ENCODE measurements at regions of chr5 and their contacts with region 1.

Region 1: DNA sequence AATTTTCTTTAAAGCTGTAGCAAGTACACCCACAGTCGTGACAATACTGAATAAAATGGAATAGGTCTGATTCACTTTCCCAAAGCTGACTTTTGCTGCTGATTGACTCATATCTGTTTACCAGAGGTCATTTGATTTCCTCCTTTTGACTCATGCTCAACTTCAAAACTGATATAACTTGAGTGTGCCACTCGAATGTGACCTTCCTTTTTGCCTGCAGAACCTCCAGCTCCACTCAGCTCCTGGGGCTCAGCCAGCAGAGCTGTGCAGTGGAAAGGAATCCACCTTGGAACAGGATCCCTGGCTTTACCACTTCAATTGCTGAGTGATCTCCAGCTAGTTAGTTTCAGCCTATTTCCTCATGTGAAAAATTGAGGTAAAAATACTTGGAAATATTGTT is 84.1 kb downstream of the FEM1C start:
- DNase-seq: no peak

Region 2: GRCh38 chr5:115271295-115272050 is 189.0 kb before region 1 on chr5:
- intact Hi-C with region 1: no loop called
- DNase-seq: no peak

Region 3: GRCh38 chr5:115423541-115423940 is 36.9 kb before region 1 on chr5:
- intact Hi-C with region 1: loop called (anchors 1 kb)
- DNase-seq: peak; percentile 86

Region 4: DNA sequence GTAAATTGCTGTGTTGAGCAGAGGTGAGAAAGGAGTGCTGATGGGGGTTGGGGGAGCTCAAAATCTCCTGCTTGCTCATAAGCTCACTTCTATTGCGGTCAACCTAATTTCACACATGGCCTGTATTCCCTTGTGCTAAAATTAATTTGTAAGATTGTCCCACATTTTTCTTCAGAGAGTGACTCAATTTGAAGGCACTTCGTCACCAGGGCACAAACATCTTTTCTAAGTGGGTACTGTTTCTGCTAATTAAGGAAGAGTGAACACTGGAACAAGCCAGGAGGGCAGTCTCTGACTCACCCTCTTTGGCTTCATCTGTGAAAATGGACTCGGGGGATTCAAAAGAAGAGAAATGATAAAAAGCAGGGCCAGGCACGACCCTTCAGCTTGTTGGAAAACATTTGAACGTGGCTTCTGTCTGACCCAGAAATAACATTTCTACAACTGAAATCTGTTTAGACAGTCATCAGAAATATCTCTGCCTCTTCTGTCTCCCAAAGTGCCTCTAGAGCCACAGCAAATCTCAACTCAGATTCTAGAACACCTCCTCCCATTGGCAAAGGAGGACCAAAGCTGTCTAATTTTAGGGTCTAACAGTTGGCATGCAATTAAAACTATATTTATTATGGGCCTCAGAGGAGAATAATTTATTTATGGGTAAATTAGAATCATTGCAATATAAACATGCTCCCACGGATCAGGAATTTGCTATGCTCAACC is 34.3 kb after region 1 on chr5:
- intact Hi-C with region 1: loop called (anchors 2 kb)
- DNase-seq: no peak

Region 5: DNA sequence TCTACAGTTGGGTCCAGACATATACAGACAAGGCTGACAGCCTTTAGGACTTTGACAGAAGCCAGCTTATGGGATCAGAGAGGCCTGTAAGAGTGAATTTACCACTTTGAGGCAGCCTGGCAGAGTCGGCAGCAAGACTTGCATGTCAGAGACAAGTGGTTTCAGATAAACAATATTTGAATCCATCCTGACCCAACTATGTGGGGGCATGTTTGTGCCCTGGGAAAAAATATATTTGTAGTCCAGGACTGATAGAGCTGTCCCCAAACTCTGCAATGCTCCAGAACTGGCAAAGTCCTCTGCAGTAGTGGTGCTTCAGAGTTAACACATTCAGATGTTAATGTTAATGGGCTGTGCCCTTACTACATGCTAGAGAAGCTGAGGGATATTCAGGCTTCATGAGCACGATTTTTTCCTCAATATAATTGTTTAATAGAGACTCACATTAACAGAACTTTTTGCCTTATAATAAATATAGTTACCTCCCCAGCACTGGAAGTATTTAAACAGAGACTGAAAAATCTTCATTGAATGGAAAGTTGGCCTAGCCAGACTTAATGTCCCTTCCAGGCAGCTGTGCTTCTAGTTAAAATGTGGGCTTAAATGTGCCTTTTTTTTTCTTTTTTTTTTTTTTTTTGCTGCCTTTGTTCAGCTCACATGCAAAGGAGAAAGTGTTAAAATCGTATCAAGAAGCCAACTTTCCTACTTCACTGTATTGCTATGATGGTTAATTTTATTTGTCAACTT is 41.2 kb after region 1 on chr5:
- intact Hi-C with region 1: loop called (anchors 1 kb)
- DNase-seq: no peak

Region 6: DNA sequence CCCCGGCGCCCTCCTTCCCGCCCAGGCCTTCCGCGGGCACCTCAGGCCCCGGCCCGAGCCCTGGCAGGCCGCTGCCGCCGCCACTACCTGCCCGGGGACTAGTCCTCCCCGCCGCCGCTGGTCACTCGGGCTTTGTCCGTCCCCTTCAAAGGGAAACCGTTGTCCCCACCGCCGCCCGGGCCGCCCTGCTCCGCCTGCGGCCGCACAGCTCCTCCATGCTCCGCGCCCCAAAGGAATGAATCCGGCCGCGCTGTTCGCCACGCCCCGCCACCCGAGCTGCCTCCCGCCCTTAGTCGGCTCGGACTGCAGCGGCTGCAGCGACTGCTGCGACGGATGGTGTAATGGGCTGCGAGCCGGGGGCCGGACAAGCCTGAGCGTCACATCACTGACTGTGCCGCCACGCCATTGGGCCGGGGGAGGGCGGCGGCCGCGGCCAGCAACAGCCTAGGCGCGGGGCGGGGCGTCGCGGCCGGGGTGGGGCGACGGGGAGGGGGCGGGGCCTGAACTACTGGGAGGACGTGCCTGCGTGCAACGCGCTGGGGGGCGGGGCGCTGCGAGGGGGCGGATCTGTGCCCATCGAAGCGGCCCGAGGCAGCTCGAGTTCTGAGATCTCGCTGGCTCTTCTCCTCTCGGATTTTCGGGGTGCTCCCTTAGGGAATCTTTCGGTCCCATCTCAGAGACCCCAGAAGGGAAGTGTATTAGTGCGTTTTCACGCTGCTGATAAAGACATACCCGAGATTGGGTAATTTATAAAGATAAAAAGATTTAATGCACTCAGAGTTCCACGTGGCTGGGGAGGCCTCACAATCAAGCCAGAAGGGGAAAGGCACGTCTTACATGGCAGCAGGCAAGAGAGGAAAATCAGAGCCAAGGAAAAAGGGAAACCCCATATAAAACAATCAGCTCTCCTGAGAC is 84.2 kb after region 1 on chr5 and contains the start of gene FEM1C:
- intact Hi-C with region 1: loop called (anchors 2 kb)
- DNase-seq: peak; percentile 99
- total RNA-seq, gene FEM1C: 56.1 TPM

Region 7: GRCh38 chr5:115634343-115635132 is 174.1 kb after region 1 on chr5:
- intact Hi-C with region 1: no loop called
- DNase-seq: peak; percentile 92

Measured in cardiac septum (tissue), 1 donor.